IMR-90 (cell line): ENCODE measurements at regions of chr10 and their contacts with region 1.

Region 1: DNA sequence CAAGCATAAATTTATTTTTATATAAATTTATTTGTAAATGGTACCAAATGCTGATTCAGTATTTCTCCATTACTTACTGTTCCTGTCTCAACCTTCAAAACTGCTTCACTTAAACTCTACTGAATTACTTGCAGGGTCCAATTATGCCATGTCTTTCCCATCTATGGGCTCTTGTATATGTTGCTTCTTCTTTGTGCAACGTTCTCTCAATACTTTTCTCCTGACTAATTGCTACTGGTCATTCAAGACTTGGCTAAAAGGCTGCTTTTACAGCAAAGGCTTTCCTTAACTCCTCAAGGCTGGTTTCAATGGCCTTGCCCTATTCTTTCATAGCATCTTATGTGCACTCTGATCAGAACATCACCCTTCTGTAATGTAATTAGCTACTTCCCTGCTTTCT is 67.9 kb downstream of the RNLS start:
- DNase-seq: peak; percentile 61
- ATAC-seq: peak; percentile 88
- H3K4me3 ChIP-seq: no peak overlapping the region
- H3K27ac ChIP-seq: no peak overlapping the region
- H3K4me1 ChIP-seq: no peaks in the 10 kb centered on the region
- H3K27me3 ChIP-seq: no peaks in the 10 kb centered on the region; the same call in 1 of the 2 replicates
- CTCF ChIP-seq: no peak
- POLR2A ChIP-seq: no peak
- RAD21 ChIP-seq: no peak

Region 2: GRCh38 chr10:88473989-88474883 is 41.0 kb before region 1 on chr10:
- CTCF ChIA-PET with region 1: interaction called, 4 read pairs
- POLR2A ChIA-PET with region 1: no interaction called
- dilution Hi-C with region 1: no loop called
- in situ Hi-C with region 1: no loop called
- intact Hi-C with region 1: loop called (anchors 5 kb)
- DNase-seq: no peak
- ATAC-seq: no peak
- H3K4me3 ChIP-seq: no peak overlapping the region
- H3K27ac ChIP-seq: no peak overlapping the region
- H3K4me1 ChIP-seq: no peaks in the 10 kb centered on the region
- H3K27me3 ChIP-seq: no peaks in the 10 kb centered on the region; the same call in 1 of the 2 replicates
- CTCF ChIP-seq: no peak
- POLR2A ChIP-seq: no peak
- RAD21 ChIP-seq: no peak

Region 3: GRCh38 chr10:88582806-88583583 is 67.8 kb after region 1 on chr10 and contains the start of gene RNLS:
- CTCF ChIA-PET with region 1: no interaction called
- POLR2A ChIA-PET with region 1: no interaction called
- dilution Hi-C with region 1: no loop called
- in situ Hi-C with region 1: no loop called
- intact Hi-C with region 1: no loop called
- DNase-seq: peak; percentile 15
- ATAC-seq: peak; percentile 96
- H3K4me3 ChIP-seq: peak within 1 kb of the TSS; percentile 59
- H3K27ac ChIP-seq: peak within 1 kb of the TSS; percentile 46
- H3K4me1 ChIP-seq: no peaks in the 10 kb centered on the region
- H3K27me3 ChIP-seq: no peaks in the 10 kb centered on the region
- CTCF ChIP-seq: peak; percentile 55
- POLR2A ChIP-seq: no peak
- RAD21 ChIP-seq: peak; percentile 31; the same call in 1 of the 2 replicates
- total RNA-seq, gene RNLS: 4.2 and 7.0 TPM in 2 replicates